ENCODE measurements at regions of chr2 and their contacts with region 1.

Region 1: DNA sequence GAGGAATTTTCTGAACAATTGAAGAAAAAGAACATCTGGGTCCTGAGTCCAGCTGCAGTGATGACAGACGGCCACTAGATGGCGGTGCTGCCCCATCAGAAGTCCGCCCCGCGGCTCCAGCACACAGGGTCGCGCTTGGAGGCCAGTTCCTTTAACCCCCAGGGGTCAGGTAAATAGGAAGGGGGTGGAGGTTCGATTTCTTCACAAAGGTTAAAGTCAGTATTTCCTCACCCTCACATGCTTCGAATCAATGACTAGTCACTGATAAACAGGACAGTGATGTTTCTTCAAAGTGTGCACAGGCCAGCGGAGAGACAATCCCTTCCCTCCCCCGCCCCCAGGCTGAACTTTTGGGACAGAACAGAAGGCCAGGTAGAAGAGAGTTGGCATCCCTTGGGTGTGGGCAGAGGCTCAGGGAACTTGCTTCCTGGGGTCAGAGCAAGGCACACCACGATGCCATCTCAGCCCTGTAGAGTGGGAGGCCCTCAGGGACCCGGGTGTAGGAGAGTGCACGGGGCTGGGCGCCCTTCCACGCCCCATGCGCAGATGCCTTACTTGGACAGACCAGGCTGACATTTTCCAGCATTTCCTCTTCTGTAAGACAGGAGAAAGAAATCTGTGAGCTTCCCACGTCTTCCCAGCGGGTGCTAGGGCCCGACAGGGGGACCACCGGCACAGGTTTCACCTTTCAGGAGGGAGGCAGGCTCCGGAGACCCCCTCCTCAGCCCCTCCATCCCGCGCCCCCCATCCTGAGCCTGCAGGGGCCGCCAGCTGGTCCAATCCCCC is 722 bp downstream of the APOB start:
- DNase-seq: peak; percentile 65 to 78
- H3K4me3 ChIP-seq: peak overlapping the region; percentile 36 to 40
- H3K27ac ChIP-seq: peak overlapping the region; percentile 74 to 89
- H3K4me1 ChIP-seq: peaks cover 0 to 45% (median 27%) of the 10 kb centered on the region in 4 donors
- H3K27me3 ChIP-seq: no peaks in the 10 kb centered on the region
- CTCF ChIP-seq: peak; percentile 96 to 99

Region 2: DNA sequence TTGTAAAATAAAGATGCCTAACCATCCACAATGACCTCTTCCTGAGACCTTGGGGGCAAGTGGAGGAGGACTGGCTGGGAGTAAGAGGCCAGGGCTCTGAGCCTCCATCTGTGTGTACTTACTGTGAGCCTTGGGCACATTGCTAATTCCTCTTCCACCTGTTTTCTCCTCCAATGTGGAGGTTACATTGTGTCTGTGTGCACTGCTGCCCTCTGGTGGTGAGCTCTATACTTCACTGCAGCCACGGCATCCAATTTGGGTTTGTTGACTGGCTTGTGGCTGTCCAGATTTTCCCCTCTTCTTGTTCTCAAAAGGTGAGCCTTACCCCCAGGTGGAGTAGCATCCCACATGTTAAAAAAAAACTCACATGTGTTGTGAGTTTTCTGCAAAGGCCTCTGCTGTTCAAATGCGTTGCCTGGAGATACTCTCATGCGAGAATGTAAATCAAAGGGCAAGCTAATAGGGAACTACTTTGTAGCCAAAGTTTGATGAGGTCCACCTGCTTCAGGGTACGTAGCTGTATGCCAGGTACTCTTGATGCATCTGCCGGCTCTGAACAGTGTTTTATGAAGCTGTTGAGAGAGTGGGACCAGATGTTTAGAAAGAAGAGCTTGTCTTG is 80.1 kb before region 1 on chr2:
- intact Hi-C with region 1: loop called (anchors 10 kb)
- DNase-seq: peak; percentile 78 to 79
- H3K4me3 ChIP-seq: no peak overlapping the region
- H3K27ac ChIP-seq: peak overlapping the region in 1 of 2 donors; percentile 62
- H3K4me1 ChIP-seq: peaks cover 0 to 37% (median 17%) of the 10 kb centered on the region in 4 donors
- H3K27me3 ChIP-seq: no peaks in the 10 kb centered on the region
- CTCF ChIP-seq: peak; percentile 79 to 83

Region 3: GRCh38 chr2:21010813-21011439 is 32.2 kb before region 1 on chr2:
- intact Hi-C with region 1: no loop called
- DNase-seq: no peak
- H3K4me3 ChIP-seq: no peak overlapping the region
- H3K27ac ChIP-seq: no peak overlapping the region
- H3K4me1 ChIP-seq: no peaks in the 10 kb centered on the region
- H3K27me3 ChIP-seq: no peaks in the 10 kb centered on the region
- CTCF ChIP-seq: no peak

Region 4: DNA sequence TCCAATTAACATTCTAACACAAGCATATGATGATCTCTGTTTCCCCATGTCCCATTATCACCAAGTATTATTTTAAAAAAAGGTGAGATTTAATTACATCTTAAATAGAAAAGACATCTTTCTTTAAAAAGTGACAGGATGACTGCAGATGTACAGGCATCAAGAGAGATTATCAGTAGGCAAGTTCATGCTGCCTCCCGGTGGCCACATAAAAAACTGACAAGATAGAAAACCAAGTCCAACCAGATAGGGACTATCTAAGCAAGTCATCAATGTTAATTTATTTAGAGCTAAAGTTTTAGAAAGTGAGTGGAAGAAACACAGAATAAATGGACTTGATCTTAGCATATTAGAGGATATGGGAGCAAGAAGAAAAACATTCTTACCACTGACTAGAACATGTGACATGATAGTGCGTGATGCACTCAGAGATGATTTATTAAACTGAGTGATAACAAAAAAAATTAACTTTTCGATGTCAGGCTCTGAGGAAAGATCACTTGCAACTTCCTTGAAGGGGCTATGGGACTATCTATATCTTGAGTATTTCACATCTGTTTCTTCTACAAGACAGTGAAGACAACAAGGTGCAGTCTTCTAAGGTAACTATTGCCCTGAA is 75.3 kb after region 1 on chr2:
- intact Hi-C with region 1: loop called (anchors 2 kb)
- DNase-seq: peak in 1 of 2 donors; percentile 43
- H3K4me3 ChIP-seq: no peak overlapping the region
- H3K27ac ChIP-seq: no peak overlapping the region
- H3K4me1 ChIP-seq: no peaks in the 10 kb centered on the region
- H3K27me3 ChIP-seq: no peaks in the 10 kb centered on the region
- CTCF ChIP-seq: peak; percentile 61 to 72

Region 5: GRCh38 chr2:21317131-21317530 is 274.0 kb after region 1 on chr2:
- intact Hi-C with region 1: loop called (anchors 10 kb)
- DNase-seq: peak; percentile 61 to 71
- H3K4me3 ChIP-seq: no peak overlapping the region
- H3K27ac ChIP-seq: no peak overlapping the region
- H3K4me1 ChIP-seq: peaks cover 0 to 5% (median 0%) of the 10 kb centered on the region in 4 donors
- H3K27me3 ChIP-seq: no peaks in the 10 kb centered on the region
- CTCF ChIP-seq: peak; percentile 67 to 72

Measured in tibial artery (tissue), 4 donors.